Activated CD4-positive, alpha-beta T cell treated with anti-CD3 and anti-CD28 coated beads, Interleukin-2, amount 10 ng/mL, durations not matched to agents 24 days and 14 days (primary cell): ENCODE measurements at regions of chr10 and their contacts with region 1.

Region 1: GRCh38 chr10:51950371-51950995 is 251.1 kb upstream of the CSTF2T start:
- DNase-seq: no peak
- H3K4me3 Mint-ChIP-seq: no peak overlapping the region
- H3K27ac Mint-ChIP-seq: no peak overlapping the region
- H3K4me1 Mint-ChIP-seq: no peaks in the 10 kb centered on the region
- H3K27me3 Mint-ChIP-seq: peaks cover 7% of the 10 kb centered on the region

Region 2: GRCh38 chr10:51640120-51640819 is 310.2 kb before region 1 on chr10:
- intact Hi-C with region 1: loop called (anchors 10 kb)
- DNase-seq: no peak
- H3K4me3 Mint-ChIP-seq: no peak overlapping the region
- H3K27ac Mint-ChIP-seq: no peak overlapping the region
- H3K4me1 Mint-ChIP-seq: no peaks in the 10 kb centered on the region
- H3K27me3 Mint-ChIP-seq: peaks cover 2% of the 10 kb centered on the region